Pancreas (tissue), 10 donors: ENCODE measurements at regions of chr3 and their contacts with region 1.

Region 1: DNA sequence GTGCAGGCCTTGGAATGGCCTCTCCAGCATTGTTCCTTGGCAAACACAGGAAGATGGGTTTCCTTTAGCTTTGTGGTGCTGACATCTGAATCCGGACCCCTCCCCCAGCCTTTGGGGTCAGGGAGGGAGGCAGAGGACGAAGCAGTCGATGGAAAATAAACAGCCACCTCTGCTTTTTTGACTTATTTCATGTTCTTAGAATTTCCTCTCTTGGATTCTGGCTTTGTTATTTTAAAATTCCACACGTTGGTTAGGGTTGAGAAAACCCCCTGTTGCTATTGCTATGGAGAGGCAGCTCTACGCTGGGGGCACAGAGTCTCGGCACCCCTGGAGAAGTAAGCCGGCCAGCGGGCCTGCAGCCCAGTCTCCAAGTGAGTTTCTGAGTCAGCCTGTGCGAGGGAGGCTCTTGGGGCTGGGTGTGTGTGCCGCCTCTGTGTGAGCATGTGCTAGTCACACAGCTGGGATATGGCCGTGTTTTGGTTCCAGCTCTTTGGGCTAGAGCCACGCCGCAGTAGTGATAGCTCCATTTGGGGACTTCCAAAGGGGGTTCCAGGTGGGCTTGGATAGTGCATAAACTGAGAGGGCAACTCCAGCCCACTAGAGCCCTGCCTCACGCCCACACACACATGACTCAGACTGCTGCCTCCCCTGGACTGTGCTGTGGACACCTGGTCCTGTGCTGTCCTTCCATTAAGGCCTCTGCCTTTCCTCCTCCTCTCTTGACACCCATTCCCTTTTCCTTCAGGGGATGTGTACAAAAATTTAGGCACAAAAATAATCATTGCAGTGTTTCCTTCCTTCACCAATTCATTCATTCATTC is 58.8 kb downstream of the AMOTL2 start:
- DNase-seq: no peak
- ATAC-seq: peak in 1 of 4 donors; percentile 24
- H3K4me3 ChIP-seq: no peak overlapping the region
- H3K27ac ChIP-seq: no peak overlapping the region
- H3K4me1 ChIP-seq: peaks cover 0 to 13% (median 0%) of the 10 kb centered on the region in 3 donors
- H3K27me3 ChIP-seq: no peaks in the 10 kb centered on the region
- CTCF ChIP-seq: no peak

Region 2: DNA sequence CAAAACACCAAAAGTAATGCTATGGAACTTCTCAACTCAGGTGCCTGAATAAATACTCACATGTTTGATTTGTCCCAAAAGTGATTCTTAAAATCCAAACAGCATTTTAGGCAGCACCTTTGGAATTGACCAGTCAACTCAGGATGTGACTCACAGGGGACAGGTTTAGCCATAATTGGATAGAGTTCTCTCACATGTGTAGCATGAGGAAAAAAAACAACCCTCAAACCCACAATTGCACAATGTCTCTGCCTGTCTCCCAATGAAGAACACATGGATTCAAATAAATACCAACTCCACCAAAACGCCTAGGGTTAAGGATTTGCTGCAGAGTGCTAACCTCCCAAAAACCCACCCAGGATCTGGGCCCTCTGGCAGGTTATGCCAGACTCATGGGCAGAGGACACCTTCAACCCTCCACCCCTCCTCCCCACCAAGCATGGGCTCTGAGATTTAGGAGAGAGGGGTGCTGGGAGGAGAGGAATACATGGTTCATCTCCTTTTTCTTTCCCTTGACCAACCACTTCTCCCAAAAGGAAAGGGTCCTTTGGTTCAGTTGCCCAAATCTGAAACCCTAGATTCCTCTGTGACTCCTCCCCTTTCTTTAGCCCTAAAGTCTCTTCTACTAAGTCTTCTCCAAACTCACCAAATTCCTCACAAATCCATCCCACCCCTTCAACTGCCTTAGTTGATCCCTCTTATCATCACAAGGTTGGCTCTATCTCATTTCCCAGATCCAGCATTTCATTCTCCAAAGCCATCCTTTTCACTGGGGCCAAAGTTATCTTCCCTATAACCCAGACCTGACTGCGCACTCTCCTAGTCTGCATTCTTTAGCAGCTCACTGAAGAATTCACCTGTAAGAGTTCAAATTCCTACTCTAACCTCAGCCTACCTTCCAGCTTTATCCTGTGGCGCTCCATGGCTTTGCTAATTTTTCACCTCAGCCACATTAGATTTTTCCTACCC is 72.6 kb before region 1 on chr3:
- intact Hi-C with region 1: no loop called
- DNase-seq: no peak
- ATAC-seq: peak in 3 of 4 donors; percentile 58 to 70 (median 60)
- H3K4me3 ChIP-seq: no peak overlapping the region
- H3K27ac ChIP-seq: peak overlapping the region in 1 of 4 donors; percentile 17
- H3K4me1 ChIP-seq: peaks cover 13 to 27% (median 16%) of the 10 kb centered on the region in 3 donors
- H3K27me3 ChIP-seq: no peaks in the 10 kb centered on the region
- CTCF ChIP-seq: no peak

Region 3: GRCh38 chr3:134364061-134364935 is 48.8 kb after region 1 on chr3:
- intact Hi-C with region 1: loop called in 2 of 3 experiments (anchors 5 kb)
- DNase-seq: peak; percentile 88 to 95 (median 90)
- ATAC-seq: peak; percentile 91 to 94 (median 92)
- H3K4me3 ChIP-seq: peak overlapping the region in 2 of 4 donors; percentile 33 to 34
- H3K27ac ChIP-seq: peak overlapping the region; percentile 67 to 71 (median 69)
- H3K4me1 ChIP-seq: peaks cover 9 to 16% (median 13%) of the 10 kb centered on the region in 3 donors
- H3K27me3 ChIP-seq: no peaks in the 10 kb centered on the region
- CTCF ChIP-seq: no peak

Region 4: DNA sequence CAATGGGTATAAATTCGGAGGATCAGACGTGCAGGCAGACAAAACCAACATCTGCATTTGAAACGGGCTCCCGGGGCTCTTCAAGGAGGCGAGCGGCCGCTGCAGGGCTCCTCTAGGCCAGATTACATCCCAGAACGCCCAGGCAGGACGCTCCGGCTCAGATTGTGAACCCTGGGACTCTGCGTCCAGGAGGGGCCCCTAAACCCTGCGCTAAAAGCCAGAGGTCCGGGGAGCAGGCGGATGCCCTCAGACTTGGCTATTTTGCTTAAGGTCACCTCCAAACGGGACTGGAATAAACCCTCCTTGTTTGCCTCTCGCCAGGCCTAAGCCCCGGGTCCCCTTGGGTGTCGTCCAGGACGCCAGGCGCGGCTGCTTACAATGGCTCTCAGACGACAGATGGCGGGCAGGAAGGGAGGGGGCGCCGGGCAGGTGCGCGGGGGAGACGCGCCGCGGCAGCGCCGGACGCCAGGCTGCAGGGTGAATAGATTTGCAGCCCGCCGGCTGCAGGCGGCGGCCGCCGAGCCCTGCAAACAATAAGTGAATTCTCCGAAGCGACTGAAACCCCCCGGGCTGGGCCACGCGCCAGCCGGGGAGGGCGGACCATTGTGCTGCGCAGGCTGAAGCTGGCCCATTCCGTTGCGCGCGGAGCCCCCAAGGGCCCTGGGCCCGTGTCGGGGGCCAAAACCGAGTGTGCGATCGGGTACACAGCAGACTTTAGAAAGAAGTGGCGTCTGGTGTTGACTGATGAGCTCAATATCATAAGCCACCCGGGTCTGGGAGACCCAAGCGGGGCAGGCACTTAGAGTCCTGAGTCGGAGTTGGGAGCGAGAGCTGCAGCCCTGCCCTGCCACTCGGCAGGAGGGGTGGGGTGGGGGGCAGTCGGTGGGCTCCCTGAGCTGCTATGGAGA is 91.1 kb after region 1 on chr3:
- intact Hi-C with region 1: no loop called
- DNase-seq: peak; percentile 62 to 88 (median 70)
- ATAC-seq: peak; percentile 86 to 93 (median 91)
- H3K4me3 ChIP-seq: peak overlapping the region; percentile 8 to 43 (median 26)
- H3K27ac ChIP-seq: no peak overlapping the region
- H3K4me1 ChIP-seq: peaks cover 0 to 4% (median 3%) of the 10 kb centered on the region in 3 donors
- H3K27me3 ChIP-seq: no peaks in the 10 kb centered on the region
- CTCF ChIP-seq: no peak